ENCODE measurements at regions of chr2 and their contacts with region 1.

Region 1: DNA sequence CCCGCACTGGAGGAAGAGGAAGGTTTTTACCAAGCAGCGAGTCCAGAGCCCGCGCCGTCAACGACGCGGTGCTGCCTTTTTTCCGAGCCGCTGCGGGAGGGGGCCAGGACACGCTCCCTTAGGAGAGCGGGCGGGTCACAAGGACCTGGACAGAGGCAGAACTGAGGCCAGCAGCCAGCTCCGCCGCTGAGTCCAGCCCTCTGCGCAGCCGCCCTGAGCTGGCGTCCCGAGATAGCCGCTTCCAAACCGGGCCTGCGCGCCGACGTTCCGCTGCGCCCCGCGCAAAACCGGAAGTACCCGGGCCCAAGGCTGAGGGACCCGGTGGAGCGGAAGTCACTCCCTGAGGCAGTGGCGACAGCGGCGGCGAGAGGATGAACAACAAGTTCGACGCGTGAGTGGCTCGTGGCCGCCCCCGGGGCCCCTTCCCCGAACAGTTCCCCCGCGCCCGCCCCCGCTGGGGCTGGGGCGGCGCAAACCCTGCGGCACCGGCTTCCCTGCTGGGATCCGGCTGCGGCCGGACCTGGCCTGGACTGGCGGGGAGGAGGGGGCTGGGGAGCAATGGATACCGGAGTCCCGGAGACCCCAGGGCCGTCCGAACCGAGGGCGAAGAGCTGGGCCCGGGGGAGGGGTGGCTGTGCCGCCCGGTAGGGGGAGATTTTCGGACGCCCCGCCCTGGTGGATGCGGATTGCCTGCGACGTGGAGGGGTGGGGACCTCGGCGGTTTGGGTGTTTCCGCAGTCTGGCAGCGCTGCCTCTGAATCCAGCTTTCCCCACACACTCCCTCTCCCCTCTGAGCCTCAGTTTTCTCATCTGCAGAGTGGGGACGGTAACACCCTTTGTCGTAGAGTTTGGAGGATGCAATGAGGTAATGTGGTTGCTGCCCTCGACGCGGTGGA is at the starts of genes EIF4E2 and TIGD1:
- DNase-seq: peak; percentile 96
- ATAC-seq: peak; percentile 95
- H3K4me3 Mint-ChIP-seq: peak within 1 kb of the TSS; percentile 98
- H3K27ac Mint-ChIP-seq: peak within 1 kb of the TSS; percentile 100
- H3K4me1 Mint-ChIP-seq: peaks cover 66% of the 10 kb centered on the region
- H3K27me3 Mint-ChIP-seq: no peaks in the 10 kb centered on the region
- total RNA-seq, gene EIF4E2: 57.0 to 68.0 TPM
- total RNA-seq, gene TIGD1: 7.6 to 7.9 TPM

Region 2: DNA sequence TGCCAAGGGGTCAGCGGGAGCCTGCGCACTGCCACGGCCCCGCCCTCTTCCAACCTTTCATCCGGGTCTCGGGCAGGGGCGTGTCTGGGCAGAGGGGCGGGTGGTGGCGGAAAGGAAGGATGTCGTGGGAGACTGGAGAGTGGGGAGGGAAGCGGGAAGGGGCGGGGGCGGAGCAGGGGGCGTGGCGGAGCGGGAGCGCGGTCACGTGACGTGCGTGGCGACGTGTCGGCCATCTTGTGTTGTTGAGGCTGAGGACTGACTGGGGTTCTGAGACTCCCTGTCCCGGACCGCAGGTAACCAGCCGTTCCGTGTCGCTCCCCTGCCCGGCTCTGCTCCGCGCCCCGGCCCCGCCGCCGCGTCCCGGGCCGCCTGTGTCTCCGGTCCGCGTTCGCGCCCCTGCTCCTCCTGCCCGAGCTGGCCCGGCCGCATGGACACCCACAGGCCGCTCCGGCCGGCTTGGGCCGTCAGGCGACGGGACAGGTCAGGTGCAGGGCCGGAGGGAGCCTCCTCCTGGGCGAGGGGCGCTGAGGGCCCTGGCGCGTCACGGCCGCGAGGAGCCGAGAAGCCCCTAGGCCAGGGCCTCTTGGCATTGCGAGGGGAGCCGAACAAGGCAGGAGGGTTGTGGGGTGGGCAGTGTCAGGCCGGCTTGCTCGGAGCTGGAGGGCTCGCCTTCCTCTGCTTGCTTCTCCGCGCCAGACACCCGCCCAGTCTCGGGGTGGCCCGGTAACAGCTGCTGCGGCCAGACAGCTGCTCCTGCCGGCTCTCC is 146.7 kb after region 1 on chr2 and contains the start of gene GIGYF2:
- CTCF ChIA-PET with region 1: no interaction called
- POLR2A ChIA-PET with region 1: no interaction called
- intact Hi-C with region 1: loop called (anchors 1 to 2 kb)
- DNase-seq: peak; percentile 98
- ATAC-seq: peak; percentile 92
- H3K4me3 Mint-ChIP-seq: peak within 1 kb of the TSS; percentile 99
- H3K27ac Mint-ChIP-seq: peak within 1 kb of the TSS; percentile 87
- H3K4me1 Mint-ChIP-seq: peaks cover 36% of the 10 kb centered on the region
- H3K27me3 Mint-ChIP-seq: no peaks in the 10 kb centered on the region
- total RNA-seq, gene GIGYF2: 51.1 to 51.9 TPM

Region 3: GRCh38 chr2:232898592-232899543 is 348.3 kb after region 1 on chr2:
- CTCF ChIA-PET with region 1: no interaction called
- POLR2A ChIA-PET with region 1: no interaction called
- intact Hi-C with region 1: loop called in 1 of 2 experiments (anchors 2 kb)
- DNase-seq: no peak
- ATAC-seq: peak; percentile 8
- H3K4me3 Mint-ChIP-seq: no peak overlapping the region
- H3K27ac Mint-ChIP-seq: no peak overlapping the region
- H3K4me1 Mint-ChIP-seq: peaks cover 15% of the 10 kb centered on the region
- H3K27me3 Mint-ChIP-seq: no peaks in the 10 kb centered on the region

Measured in activated CD4-positive, alpha-beta T cell treated with anti-CD3 and anti-CD28 coated beads for 36 hours (primary cell).